Tibial artery (tissue), 4 donors: ENCODE measurements at regions of chr14 and their contacts with region 1.

Region 1: DNA sequence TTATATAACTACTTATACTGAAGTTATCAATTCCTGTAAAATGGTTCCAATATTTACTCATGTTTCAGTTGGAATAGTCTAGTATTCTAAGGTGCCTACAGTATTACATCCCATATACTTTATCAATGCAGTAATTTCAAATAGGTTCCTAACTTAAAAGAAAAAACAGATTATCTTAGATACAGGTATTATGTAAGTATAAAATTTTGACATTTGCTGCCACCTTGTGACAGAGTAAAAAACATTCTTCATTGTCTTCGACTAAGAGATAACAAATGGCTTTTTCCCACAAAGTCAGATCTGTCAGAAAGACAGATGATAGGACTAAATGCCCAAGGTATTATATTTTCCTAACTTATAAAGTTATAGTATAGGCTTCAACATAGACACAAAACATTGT is 78.7 kb downstream of the TXNDC16 start:
- DNase-seq: no peak
- H3K4me3 ChIP-seq: no peak overlapping the region
- H3K27ac ChIP-seq: no peak overlapping the region
- H3K4me1 ChIP-seq: no peaks in the 10 kb centered on the region
- H3K27me3 ChIP-seq: no peaks in the 10 kb centered on the region
- CTCF ChIP-seq: peak; percentile 23 to 56

Region 2: GRCh38 chr14:52299692-52300278 is 173.8 kb before region 1 on chr14:
- intact Hi-C with region 1: loop called (anchors 5 kb)
- DNase-seq: no peak
- H3K4me3 ChIP-seq: no peak overlapping the region
- H3K27ac ChIP-seq: no peak overlapping the region
- H3K4me1 ChIP-seq: no peaks in the 10 kb centered on the region
- H3K27me3 ChIP-seq: no peaks in the 10 kb centered on the region
- CTCF ChIP-seq: peak; percentile 65 to 80